Heart left ventricle (tissue), 16 donors: ENCODE measurements at regions of chr5 and their contacts with region 1.

Region 1: DNA sequence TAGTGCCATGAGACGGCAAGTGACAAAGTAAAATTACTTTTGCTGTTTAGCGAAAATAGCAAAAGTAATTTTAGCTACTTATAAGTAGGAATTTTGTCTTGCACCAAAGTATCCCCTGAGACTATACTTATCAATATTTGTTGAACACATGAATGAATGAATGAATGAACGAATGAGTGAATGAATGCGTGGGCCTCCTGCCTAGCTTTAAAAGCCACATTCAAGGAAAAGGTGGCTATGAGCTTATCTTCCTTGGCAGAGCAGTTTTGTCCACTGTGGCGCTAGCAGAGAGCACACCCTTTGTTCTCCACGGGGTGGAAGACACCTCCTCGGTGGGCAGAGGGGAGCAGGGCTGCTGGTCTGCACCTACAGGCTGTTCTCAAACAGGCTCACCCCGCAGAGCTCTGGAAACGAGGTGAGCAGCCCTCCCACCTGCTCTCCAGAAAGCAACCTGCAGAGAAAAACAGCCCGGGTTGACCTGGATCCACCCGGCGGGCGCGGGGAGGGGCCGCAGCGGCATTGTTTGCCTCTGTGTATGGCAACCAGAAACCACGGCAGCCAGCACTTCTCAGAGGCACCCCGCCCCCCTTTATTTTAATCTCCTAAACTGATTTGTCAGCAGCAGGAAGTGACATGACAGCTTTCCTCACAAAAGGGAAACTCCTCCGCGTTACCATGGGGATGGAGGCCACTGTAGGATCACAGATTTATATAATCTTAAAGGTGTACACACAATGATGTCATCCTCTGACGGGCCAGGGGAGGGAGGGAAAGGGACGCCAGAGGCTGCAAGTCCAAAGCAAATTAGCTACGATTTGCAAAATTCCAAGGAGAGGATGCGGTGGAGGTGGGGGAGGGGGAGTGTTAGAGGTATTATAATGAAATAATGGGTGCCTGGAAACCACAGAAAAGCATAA is 5.9 kb downstream of the DUSP1 start:
- DNase-seq: peak; percentile 94 to 98 (median 97)
- ATAC-seq: peak; percentile 69 to 81 (median 70)
- H3K4me3 ChIP-seq: peak overlapping the region in 11 of 12 donors; percentile 15 to 98 (median 90)
- H3K27ac ChIP-seq: peak overlapping the region; percentile 95 to 100 (median 100)
- H3K4me1 ChIP-seq: peaks cover 3 to 55% (median 27%) of the 10 kb centered on the region in 12 donors
- H3K27me3 ChIP-seq: no peaks in the 10 kb centered on the region
- CTCF ChIP-seq: no peak
- POLR2A ChIP-seq: peak in 1 of 2 donors; percentile 61

Region 2: GRCh38 chr5:172733131-172733973 is 31.8 kb before region 1 on chr5:
- intact Hi-C with region 1: loop called in 1 of 10 experiments (anchors 5 kb)
- DNase-seq: peak; percentile 84 to 91 (median 88)
- ATAC-seq: peak; percentile 88 to 94 (median 92)
- H3K4me3 ChIP-seq: peak overlapping the region in 2 of 12 donors; percentile 12 to 16
- H3K27ac ChIP-seq: peak overlapping the region; percentile 86 to 100 (median 96)
- H3K4me1 ChIP-seq: peaks cover 6 to 31% (median 24%) of the 10 kb centered on the region in 12 donors
- H3K27me3 ChIP-seq: no peaks in the 10 kb centered on the region
- CTCF ChIP-seq: no peak
- POLR2A ChIP-seq: peak in 1 of 2 donors; percentile 49